HCT116 (cell line): ENCODE measurements at regions of chr14 and their contacts with region 1.

Region 1: GRCh38 chr14:72104011-72104613 is 171.9 kb downstream of the RGS6 start:
- DNase-seq: peak; percentile 3
- ATAC-seq: peak; percentile 87
- H3K4me3 ChIP-seq: no peak overlapping the region
- H3K27ac ChIP-seq: no peak overlapping the region
- H3K4me1 ChIP-seq: no peaks in the 10 kb centered on the region
- H3K27me3 ChIP-seq: 0 out of 2 replicates have a peak, but pooled peaks cover 7% of the 10 kb centered on the region
- CTCF ChIP-seq: peak; percentile 36 to 96 (median 94); a peak in 4 of 6 replicates
- POLR2A ChIP-seq: no peak
- RAD21 ChIP-seq: peak; percentile 39; the same call in 1 of the 2 replicates

Region 2: GRCh38 chr14:70907176-70907995 is 1196.7 kb before region 1 on chr14 and contains the start of gene PCNX1:
- CTCF ChIA-PET with region 1: no interaction called
- POLR2A ChIA-PET with region 1: no interaction called
- RAD21 ChIA-PET with region 1: no interaction called
- intact Hi-C with region 1: no loop called
- DNase-seq: peak; percentile 46
- ATAC-seq: peak; percentile 86
- H3K4me3 ChIP-seq: peak within 1 kb of the TSS; percentile 61 to 75
- H3K27ac ChIP-seq: peak within 1 kb of the TSS; percentile 74
- H3K4me1 ChIP-seq: peaks cover 9 to 30% of the 10 kb centered on the region in 2 experiments
- H3K27me3 ChIP-seq: no peaks in the 10 kb centered on the region
- CTCF ChIP-seq: peak; percentile 50 to 87 (median 66); a peak in 5 of 6 replicates
- POLR2A ChIP-seq: peak; percentile 24
- RAD21 ChIP-seq: peak; percentile 41
- total RNA-seq, gene PCNX1: 52.2 TPM

Region 3: GRCh38 chr14:72084935-72085334 is 19.2 kb before region 1 on chr14:
- CTCF ChIA-PET with region 1: interaction called, 11 read pairs
- POLR2A ChIA-PET with region 1: no interaction called
- RAD21 ChIA-PET with region 1: no interaction called
- intact Hi-C with region 1: no loop called
- DNase-seq: no peak
- ATAC-seq: no peak
- H3K4me3 ChIP-seq: no peak overlapping the region
- H3K27ac ChIP-seq: no peak overlapping the region
- H3K4me1 ChIP-seq: no peaks in the 10 kb centered on the region
- H3K27me3 ChIP-seq: peaks cover 5% of the 10 kb centered on the region; the same call in 1 of the 2 replicates
- CTCF ChIP-seq: no peak
- POLR2A ChIP-seq: no peak
- RAD21 ChIP-seq: no peak

Region 4: DNA sequence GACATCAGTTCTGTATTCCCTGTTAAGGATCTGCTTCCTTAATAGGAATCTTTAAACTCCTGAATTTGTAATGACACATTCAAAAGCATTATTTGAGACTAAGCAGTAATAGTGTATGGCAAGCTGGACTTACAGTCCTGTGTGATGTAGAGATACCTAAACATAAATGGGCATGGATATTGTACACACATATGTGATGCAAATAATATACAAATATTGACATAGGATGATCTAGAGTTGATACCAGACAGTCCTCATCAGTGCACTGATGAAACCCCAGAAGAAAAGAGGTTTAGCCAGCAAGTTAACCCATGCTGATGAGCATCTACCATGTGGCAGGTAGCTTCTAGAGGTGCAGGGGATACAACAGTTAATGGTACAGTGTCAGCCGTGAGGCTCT is 11.9 kb after region 1 on chr14:
- CTCF ChIA-PET with region 1: interaction called, 10 read pairs
- POLR2A ChIA-PET with region 1: no interaction called
- RAD21 ChIA-PET with region 1: no interaction called
- intact Hi-C with region 1: no loop called
- DNase-seq: no peak
- ATAC-seq: no peak
- H3K4me3 ChIP-seq: no peak overlapping the region
- H3K27ac ChIP-seq: no peak overlapping the region
- H3K4me1 ChIP-seq: no peaks in the 10 kb centered on the region
- H3K27me3 ChIP-seq: peaks cover 9% of the 10 kb centered on the region; the same call in 1 of the 2 replicates
- CTCF ChIP-seq: no peak
- POLR2A ChIP-seq: no peak
- RAD21 ChIP-seq: no peak